Testis (tissue), 5 donors: ENCODE measurements at regions of chr17 and their contacts with region 1.

Region 1: GRCh38 chr17:39744836-39745672 is 7.3 kb downstream of the GRB7 start:
- DNase-seq: no peak
- H3K4me3 ChIP-seq: no peak overlapping the region
- H3K27ac ChIP-seq: no peak overlapping the region
- H3K4me1 ChIP-seq: peaks cover 7% of the 10 kb centered on the region
- H3K27me3 ChIP-seq: no peaks in the 10 kb centered on the region
- CTCF ChIP-seq: no peak
- POLR2A ChIP-seq: no peak

Region 2: GRCh38 chr17:39626171-39627046 is 118.6 kb before region 1 on chr17 and contains the start of gene PPP1R1B:
- intact Hi-C with region 1: loop called (anchors 5 kb)
- DNase-seq: no peak
- H3K4me3 ChIP-seq: peak within 1 kb of the TSS; percentile 16 to 61
- H3K27ac ChIP-seq: no peak within 1 kb of the TSS
- H3K4me1 ChIP-seq: peaks cover 22% of the 10 kb centered on the region
- H3K27me3 ChIP-seq: no peaks in the 10 kb centered on the region
- CTCF ChIP-seq: no peak
- POLR2A ChIP-seq: no peak
- total RNA-seq, gene PPP1R1B: 22.4 to 24.3 TPM